CD4-positive, alpha-beta T cell (primary cell): ENCODE measurements at regions of chr17 and their contacts with region 1.

Region 1: GRCh38 chr17:39153599-39154051 is 2.2 kb upstream of the PLXDC1 start:
- DNase-seq: peak; percentile 89 to 98 (median 94)
- ATAC-seq: peak; percentile 60
- H3K4me3 ChIP-seq: peak overlapping the region; percentile 94
- H3K4me3 Mint-ChIP-seq: peak overlapping the region; percentile 99
- H3K27ac ChIP-seq: peak overlapping the region; percentile 47 to 69
- H3K27ac Mint-ChIP-seq: peak overlapping the region; percentile 97
- H3K4me1 ChIP-seq: peaks cover 55% of the 10 kb centered on the region
- H3K4me1 Mint-ChIP-seq: peaks cover 47% of the 10 kb centered on the region
- H3K27me3 ChIP-seq: peaks cover 0 to 5% of the 10 kb centered on the region in 2 experiments
- H3K27me3 Mint-ChIP-seq: peaks cover 19% of the 10 kb centered on the region
- CTCF ChIP-seq: no peak

Region 2: GRCh38 chr17:38761612-38762011 is 392.0 kb before region 1 on chr17:
- CTCF ChIA-PET with region 1: no interaction called
- POLR2A ChIA-PET with region 1: no interaction called
- intact Hi-C with region 1: loop called (anchors 1 to 10 kb)
- DNase-seq: peak in 5 of 14 experiments; percentile 22 to 59 (median 35)
- ATAC-seq: peak; percentile 48
- H3K4me3 ChIP-seq: no peak overlapping the region
- H3K4me3 Mint-ChIP-seq: no peak overlapping the region
- H3K27ac ChIP-seq: no peak overlapping the region
- H3K27ac Mint-ChIP-seq: peak overlapping the region; percentile 21
- H3K4me1 ChIP-seq: peaks cover 11% of the 10 kb centered on the region
- H3K4me1 Mint-ChIP-seq: peaks cover 4% of the 10 kb centered on the region
- H3K27me3 ChIP-seq: no peaks in the 10 kb centered on the region
- H3K27me3 Mint-ChIP-seq: no peaks in the 10 kb centered on the region
- CTCF ChIP-seq: peak; percentile 17

Region 3: DNA sequence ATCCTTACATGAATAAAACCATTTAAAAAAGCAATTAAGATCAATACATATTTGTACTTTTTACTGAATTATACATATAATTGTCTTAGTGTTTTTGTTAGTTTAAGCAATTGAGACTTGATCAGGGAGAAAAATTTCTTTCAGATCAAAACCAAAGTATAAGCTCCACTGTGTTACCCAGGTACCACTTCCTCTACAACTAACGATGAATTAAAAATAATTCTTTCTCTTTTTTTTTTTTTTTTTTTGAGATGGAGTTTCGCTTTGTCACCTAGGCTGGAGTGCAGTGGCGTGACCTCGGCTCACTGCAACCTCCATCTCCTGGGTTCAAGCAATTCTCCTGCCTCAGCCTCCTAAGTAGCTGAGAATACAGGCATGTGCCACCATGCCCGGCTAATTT is 193.2 kb before region 1 on chr17:
- CTCF ChIA-PET with region 1: no interaction called
- POLR2A ChIA-PET with region 1: interaction called, 10 read pairs
- intact Hi-C with region 1: no loop called
- DNase-seq: peak in 1 of 14 experiments; percentile 41
- ATAC-seq: peak; percentile 85
- H3K4me3 ChIP-seq: peak overlapping the region; percentile 8
- H3K4me3 Mint-ChIP-seq: peak overlapping the region; percentile 42
- H3K27ac ChIP-seq: no peak overlapping the region
- H3K27ac Mint-ChIP-seq: peak overlapping the region; percentile 44
- H3K4me1 ChIP-seq: peaks cover 11% of the 10 kb centered on the region
- H3K4me1 Mint-ChIP-seq: peaks cover 37% of the 10 kb centered on the region
- H3K27me3 ChIP-seq: no peaks in the 10 kb centered on the region
- H3K27me3 Mint-ChIP-seq: no peaks in the 10 kb centered on the region
- CTCF ChIP-seq: no peak

Region 4: GRCh38 chr17:39018267-39019134 is 135.1 kb before region 1 on chr17:
- CTCF ChIA-PET with region 1: interaction called, 4 read pairs
- POLR2A ChIA-PET with region 1: interaction called, 25 read pairs
- intact Hi-C with region 1: no loop called
- DNase-seq: peak in 4 of 14 experiments; percentile 15 to 34 (median 24)
- ATAC-seq: peak; percentile 28
- H3K4me3 ChIP-seq: no peak overlapping the region
- H3K4me3 Mint-ChIP-seq: peak overlapping the region; percentile 11
- H3K27ac ChIP-seq: peak overlapping the region; percentile 23 to 37
- H3K27ac Mint-ChIP-seq: peak overlapping the region; percentile 92
- H3K4me1 ChIP-seq: peaks cover 31% of the 10 kb centered on the region
- H3K4me1 Mint-ChIP-seq: peaks cover 33% of the 10 kb centered on the region
- H3K27me3 ChIP-seq: no peaks in the 10 kb centered on the region
- H3K27me3 Mint-ChIP-seq: no peaks in the 10 kb centered on the region
- CTCF ChIP-seq: no peak

Region 5: DNA sequence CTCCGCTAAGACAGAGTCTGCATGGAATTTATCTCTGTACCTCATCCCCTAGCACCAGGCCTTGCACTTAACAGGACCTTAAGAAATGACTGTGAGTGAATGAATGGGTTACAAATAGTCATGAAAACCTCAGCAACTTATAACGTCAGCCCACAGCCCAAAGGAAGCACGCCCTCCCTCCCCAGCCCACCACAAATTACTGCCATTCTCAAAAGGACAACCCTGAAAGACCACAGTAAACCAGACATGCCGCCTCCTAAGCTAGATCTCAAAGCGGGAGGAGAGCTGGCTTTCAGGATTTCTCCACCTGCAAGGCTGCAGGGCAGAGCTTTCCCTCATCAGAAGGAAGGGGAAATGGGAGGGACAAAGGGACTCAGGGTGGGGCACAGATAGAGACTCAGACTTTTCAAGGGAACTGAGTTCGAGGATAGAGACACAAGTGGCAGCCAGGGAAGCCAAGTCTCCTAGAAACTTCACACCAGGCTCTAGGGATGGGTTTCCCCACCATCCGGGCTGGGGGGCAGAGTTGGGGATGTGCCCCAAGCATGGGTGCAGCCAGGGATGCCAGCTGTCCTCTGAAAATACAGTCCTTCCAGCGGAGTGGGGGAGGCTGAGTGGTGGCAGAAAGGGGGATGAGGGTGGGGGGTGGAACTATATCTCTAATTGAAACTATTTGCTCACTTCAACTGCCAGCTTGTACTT is 58.9 kb before region 1 on chr17:
- CTCF ChIA-PET with region 1: interaction called, 11 read pairs
- POLR2A ChIA-PET with region 1: interaction called, 71 read pairs
- intact Hi-C with region 1: loop called (anchors 1 to 2 kb)
- DNase-seq: peak in 10 of 14 experiments; percentile 15 to 77 (median 36)
- ATAC-seq: peak; percentile 42
- H3K4me3 ChIP-seq: no peak overlapping the region
- H3K4me3 Mint-ChIP-seq: peak overlapping the region; percentile 78
- H3K27ac ChIP-seq: peak overlapping the region; percentile 55 to 58
- H3K27ac Mint-ChIP-seq: peak overlapping the region; percentile 94
- H3K4me1 ChIP-seq: peaks cover 93% of the 10 kb centered on the region
- H3K4me1 Mint-ChIP-seq: peaks cover 90% of the 10 kb centered on the region
- H3K27me3 ChIP-seq: no peaks in the 10 kb centered on the region
- H3K27me3 Mint-ChIP-seq: no peaks in the 10 kb centered on the region
- CTCF ChIP-seq: no peak

Region 6: GRCh38 chr17:39174907-39175694 is 21.5 kb after region 1 on chr17:
- CTCF ChIA-PET with region 1: interaction called, 24 read pairs
- POLR2A ChIA-PET with region 1: interaction called, 7 read pairs
- intact Hi-C with region 1: no loop called
- DNase-seq: peak; percentile 67 to 91 (median 74)
- ATAC-seq: peak; percentile 95
- H3K4me3 ChIP-seq: no peak overlapping the region
- H3K4me3 Mint-ChIP-seq: no peak overlapping the region
- H3K27ac ChIP-seq: no peak overlapping the region
- H3K27ac Mint-ChIP-seq: no peak overlapping the region
- H3K4me1 ChIP-seq: peaks cover 22% of the 10 kb centered on the region
- H3K4me1 Mint-ChIP-seq: peaks cover 22% of the 10 kb centered on the region
- H3K27me3 ChIP-seq: no peaks in the 10 kb centered on the region
- H3K27me3 Mint-ChIP-seq: no peaks in the 10 kb centered on the region
- CTCF ChIP-seq: peak; percentile 82

Region 7: DNA sequence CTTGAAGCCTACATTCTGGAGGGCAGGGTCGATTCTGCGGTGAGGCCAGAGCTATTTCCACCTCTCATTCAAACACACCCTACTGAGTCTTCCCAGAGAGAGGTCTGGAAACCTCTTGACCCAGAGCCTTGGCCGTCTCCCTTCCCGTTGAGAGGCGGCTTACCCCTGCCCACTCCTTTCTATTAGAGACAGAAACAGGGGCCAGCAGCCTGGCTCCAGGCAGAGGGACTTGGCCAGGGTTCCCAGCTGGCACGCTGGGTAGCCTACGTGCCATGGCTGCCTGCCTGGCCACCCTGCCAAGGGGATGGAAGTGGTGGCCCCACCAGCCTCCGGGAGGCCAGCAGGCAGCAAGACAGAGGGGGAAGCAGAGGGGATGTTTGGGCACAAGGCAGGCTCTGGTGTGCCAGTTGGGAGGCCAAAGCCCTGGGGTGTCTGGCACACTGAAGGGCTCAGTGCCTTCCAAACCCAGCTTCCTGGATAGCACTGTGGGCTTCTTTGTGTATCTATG is 66.1 kb after region 1 on chr17:
- CTCF ChIA-PET with region 1: no interaction called
- POLR2A ChIA-PET with region 1: no interaction called
- intact Hi-C with region 1: no loop called
- DNase-seq: no peak
- ATAC-seq: no peak
- H3K4me3 ChIP-seq: no peak overlapping the region
- H3K4me3 Mint-ChIP-seq: no peak overlapping the region
- H3K27ac ChIP-seq: no peak overlapping the region
- H3K27ac Mint-ChIP-seq: no peak overlapping the region
- H3K4me1 ChIP-seq: peaks cover 7% of the 10 kb centered on the region
- H3K4me1 Mint-ChIP-seq: no peaks in the 10 kb centered on the region
- H3K27me3 ChIP-seq: peaks cover 15 to 18% of the 10 kb centered on the region in 2 experiments
- H3K27me3 Mint-ChIP-seq: peaks cover 38% of the 10 kb centered on the region
- CTCF ChIP-seq: no peak